IMR-90 (cell line): ENCODE measurements at regions of chr20 and their contacts with region 1.

Region 1: DNA sequence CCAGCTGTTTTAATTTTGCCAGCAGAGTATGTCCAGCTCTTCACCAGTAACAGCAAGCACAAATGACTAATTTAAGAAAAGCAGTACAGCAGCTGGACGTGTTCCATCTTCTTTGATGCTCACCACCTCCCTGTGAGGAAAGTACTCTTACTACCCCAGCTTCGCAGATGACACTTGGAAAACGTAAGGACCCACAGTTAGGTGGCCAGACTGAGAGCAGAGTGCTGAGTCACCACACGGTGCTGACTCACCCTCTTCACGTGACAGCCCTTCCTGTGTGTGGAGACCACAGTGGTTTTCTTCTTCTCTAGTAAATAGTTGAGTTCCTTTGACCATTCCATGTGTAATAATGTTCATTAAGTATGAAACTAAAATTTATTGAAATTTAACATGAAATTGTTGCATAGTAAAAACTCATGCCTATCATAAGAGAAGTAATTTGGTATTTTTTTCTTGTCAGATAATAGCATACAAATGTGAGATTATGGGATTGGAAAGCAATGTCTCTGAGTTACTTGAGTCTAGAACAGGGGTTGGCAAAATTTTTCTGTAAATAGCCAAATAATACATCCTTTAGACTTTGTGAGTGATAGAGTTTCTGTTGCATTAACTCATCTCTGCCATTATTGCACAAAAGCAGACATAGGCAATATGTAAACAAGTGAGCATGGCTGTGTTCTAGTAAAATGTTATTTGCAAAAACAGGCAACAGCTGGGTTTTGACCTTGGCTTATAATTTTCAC is 76.6 kb downstream of the SLX4IP start:
- DNase-seq: peak; percentile 99
- ATAC-seq: peak; percentile 89
- H3K4me3 ChIP-seq: no peak overlapping the region
- H3K27ac ChIP-seq: peak overlapping the region; percentile 95
- H3K4me1 ChIP-seq: peaks cover 22% of the 10 kb centered on the region
- H3K27me3 ChIP-seq: no peaks in the 10 kb centered on the region
- CTCF ChIP-seq: no peak
- POLR2A ChIP-seq: 0 out of 2 replicates have a peak, but pooled peaks have one; percentile 34
- RAD21 ChIP-seq: no peak

Region 2: GRCh38 chr20:10447027-10447426 is 64.7 kb before region 1 on chr20:
- CTCF ChIA-PET with region 1: no interaction called
- POLR2A ChIA-PET with region 1: no interaction called
- dilution Hi-C with region 1: no loop called
- in situ Hi-C with region 1: no loop called
- intact Hi-C with region 1: no loop called
- DNase-seq: peak; percentile 84
- ATAC-seq: peak; percentile 92
- H3K4me3 ChIP-seq: no peak overlapping the region
- H3K27ac ChIP-seq: no peak overlapping the region
- H3K4me1 ChIP-seq: no peaks in the 10 kb centered on the region; the same call in 1 of the 2 replicates
- H3K27me3 ChIP-seq: no peaks in the 10 kb centered on the region
- CTCF ChIP-seq: no peak
- POLR2A ChIP-seq: no peak
- RAD21 ChIP-seq: 0 out of 2 replicates have a peak, but pooled peaks have one; percentile 22

Region 3: GRCh38 chr20:10476319-10476724 is 35.4 kb before region 1 on chr20:
- CTCF ChIA-PET with region 1: no interaction called
- POLR2A ChIA-PET with region 1: no interaction called
- dilution Hi-C with region 1: no loop called
- in situ Hi-C with region 1: no loop called
- intact Hi-C with region 1: loop called (anchors 5 kb)
- DNase-seq: peak; percentile 51
- ATAC-seq: peak; percentile 73
- H3K4me3 ChIP-seq: no peak overlapping the region
- H3K27ac ChIP-seq: no peak overlapping the region
- H3K4me1 ChIP-seq: peaks cover 4% of the 10 kb centered on the region
- H3K27me3 ChIP-seq: no peaks in the 10 kb centered on the region
- CTCF ChIP-seq: no peak
- POLR2A ChIP-seq: no peak
- RAD21 ChIP-seq: no peak

Region 4: DNA sequence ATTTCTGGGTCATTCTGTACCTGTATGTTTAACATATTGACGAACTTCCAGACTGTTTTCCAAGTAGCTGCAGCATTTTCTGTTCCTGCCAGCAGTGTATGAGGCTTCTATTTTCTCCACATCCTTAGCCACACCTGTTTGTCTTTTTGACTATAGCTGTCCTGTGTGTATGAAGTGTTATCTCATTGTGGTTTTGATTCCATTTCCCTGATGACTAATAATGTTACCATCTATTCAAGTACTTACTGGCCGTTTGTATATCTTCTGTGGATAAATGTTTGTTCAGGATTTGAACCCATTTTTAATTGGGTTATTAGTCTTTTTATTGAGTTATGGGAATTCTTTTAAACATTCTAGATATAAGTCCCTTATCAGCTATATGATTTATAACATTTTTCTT is 66.9 kb after region 1 on chr20:
- CTCF ChIA-PET with region 1: no interaction called
- POLR2A ChIA-PET with region 1: no interaction called
- dilution Hi-C with region 1: no loop called
- in situ Hi-C with region 1: no loop called
- intact Hi-C with region 1: no loop called
- DNase-seq: peak; percentile 92
- ATAC-seq: peak; percentile 81
- H3K4me3 ChIP-seq: no peak overlapping the region
- H3K27ac ChIP-seq: no peak overlapping the region
- H3K4me1 ChIP-seq: peaks cover 4% of the 10 kb centered on the region
- H3K27me3 ChIP-seq: no peaks in the 10 kb centered on the region
- CTCF ChIP-seq: no peak
- POLR2A ChIP-seq: no peak
- RAD21 ChIP-seq: no peak